Left ventricle myocardium superior (tissue), 1 donor: ENCODE measurements at regions of chr6 and their contacts with region 1.

Region 1: GRCh38 chr6:121430514-121431460 is 4.7 kb upstream of the GJA1 start:
- DNase-seq: no peak
- ATAC-seq: peak; percentile 33

Region 2: DNA sequence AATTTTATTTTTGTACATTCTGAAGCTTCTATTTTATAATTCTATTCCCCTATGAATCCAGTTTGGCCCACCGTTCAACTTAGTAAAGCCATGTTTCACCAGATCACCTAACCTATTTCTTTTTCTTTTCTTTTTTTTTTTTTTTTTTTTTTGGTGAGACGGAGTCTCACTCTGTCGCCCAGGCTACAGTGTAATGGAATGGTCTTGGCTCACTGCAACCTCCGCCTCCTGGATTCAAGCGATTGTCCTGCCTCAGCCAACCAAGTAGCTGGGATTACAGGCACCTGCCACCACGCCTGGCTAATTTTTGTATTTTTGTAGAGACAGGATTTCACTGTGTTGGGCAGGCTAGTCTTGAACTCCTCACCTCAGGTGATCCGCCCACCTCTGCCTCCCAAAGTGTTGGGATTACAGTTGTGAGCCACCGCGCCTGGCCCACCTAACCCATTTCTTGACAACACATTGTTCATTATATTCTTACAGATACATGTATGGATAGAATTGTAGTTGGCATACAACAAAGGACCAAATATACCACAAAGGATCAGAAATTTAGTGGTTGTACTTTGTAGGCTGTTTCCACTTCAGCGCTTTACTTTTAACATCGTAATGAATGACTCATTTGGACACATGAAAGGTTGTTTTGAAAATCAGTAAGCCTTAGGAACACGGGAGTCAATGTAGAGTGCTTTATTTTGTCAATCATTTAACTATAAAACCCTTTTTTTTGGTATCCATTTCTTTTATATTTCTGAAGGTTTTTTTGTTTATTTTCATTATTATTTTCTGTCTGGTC is 67.9 kb after region 1 on chr6:
- intact Hi-C with region 1: no loop called
- DNase-seq: no peak
- ATAC-seq: no peak

Region 3: DNA sequence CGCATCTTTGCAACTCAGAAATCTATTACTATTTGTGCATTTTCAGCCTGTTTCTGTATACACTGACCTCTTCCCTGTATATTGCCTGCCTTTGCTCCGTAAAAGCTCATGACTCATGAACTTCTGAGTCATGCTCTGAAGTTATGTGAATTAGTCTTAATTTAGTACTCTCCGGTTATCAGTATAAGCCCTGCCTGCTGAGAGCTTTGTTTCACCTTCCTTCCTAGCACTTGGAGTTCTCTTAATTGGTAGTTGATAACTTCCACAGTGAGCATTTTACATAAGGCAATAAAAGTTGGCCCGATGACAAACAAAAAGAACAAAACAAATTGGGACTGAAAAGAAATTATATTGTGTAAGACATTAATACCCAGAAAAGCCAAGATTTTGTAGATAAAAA is 236.0 kb after region 1 on chr6:
- intact Hi-C with region 1: loop called (anchors 10 kb)
- DNase-seq: no peak
- ATAC-seq: peak; percentile 95

Region 4: DNA sequence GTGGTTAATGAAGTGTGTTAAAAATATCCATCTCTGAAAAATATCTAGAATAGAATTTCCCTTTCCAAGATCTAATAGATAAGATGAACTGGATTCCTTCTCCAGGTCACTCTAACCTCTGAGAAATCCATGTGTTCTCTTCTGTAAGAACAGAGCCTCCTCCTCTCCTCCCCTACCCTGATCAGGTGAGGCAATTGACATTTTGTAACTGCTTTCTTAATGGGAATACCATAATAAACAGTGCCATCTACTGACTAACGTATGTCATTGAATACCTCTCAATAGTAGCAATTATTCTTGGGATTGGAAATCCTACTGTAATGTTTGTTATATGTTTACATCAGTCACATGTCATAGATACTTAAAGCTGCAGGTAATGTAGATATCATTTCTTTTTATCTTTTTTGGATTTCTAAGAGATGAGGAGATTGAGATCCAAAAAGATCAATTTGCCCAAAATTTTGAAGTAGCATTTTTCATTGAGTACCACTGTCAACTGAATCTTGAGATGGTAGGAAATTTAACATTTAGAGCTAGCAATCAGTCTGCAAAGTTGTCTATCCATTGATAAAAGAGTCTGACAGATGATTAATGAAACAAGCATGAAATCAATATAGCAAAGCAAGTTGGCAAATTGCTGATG is 602.9 kb after region 1 on chr6:
- intact Hi-C with region 1: loop called (anchors 2 kb)
- DNase-seq: no peak
- ATAC-seq: peak; percentile 87

Region 5: DNA sequence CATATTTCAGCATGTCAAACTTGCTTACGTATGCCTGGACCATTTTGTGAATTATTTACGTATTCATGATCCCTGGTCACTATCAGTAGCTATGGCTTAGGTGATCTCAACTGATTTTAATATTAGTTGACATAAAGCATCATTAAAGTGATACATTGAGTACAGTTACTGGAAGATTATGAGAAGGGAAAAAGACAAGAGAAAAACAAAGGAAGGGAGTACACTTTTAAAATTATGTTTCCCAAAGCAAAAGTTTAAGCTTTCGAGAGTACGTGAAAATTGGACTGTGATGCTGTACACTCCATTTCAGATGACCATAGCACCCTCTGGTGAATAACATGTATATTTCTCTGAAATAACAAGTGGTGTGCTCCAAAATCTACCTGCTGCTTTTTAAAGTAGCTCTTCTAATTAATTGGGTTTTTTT is 753.6 kb after region 1 on chr6:
- intact Hi-C with region 1: loop called (anchors 2 kb)
- DNase-seq: no peak
- ATAC-seq: peak; percentile 80